ENCODE measurements at regions of chr7 and their contacts with region 1.

Region 1: GRCh38 chr7:6323967-6324701 is 51.7 kb upstream of the CYTH3 start:
- DNase-seq: no peak
- H3K4me3 ChIP-seq: no peak overlapping the region
- H3K27ac ChIP-seq: no peak overlapping the region
- H3K4me1 ChIP-seq: no peaks in the 10 kb centered on the region
- H3K27me3 ChIP-seq: no peaks in the 10 kb centered on the region
- CTCF ChIP-seq: no peak
- EP300 ChIP-seq: no peak
- RAD21 ChIP-seq: no peak

Region 2: DNA sequence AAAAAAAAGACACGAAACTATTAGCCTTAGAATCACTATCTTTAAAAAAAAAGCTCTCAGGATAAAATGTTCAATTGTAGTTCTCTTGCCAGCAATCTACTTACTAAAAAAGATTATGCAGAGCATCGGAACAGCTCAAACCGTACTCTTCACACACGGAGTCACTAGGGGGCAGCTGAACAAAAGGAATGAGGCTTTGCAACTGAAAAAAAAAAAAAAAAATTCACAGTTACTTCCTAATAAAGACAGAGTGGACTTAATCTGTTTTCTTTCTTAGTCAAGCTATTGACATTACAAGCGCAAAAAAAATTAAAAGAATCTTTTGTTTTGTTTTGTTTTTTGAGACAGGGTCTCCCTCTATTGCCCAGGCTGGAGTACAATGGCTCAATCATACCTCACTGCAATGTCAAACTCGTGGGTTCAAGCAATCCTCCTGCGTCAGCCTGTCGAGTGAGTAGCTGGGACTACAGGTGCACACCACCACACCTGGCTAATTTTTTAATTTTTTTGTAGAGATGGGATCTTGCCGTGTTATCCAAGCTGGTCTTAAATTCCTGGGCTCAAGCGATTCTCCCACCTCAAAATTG is 326.8 kb before region 1 on chr7:
- CTCF ChIA-PET with region 1: interaction called, 29 read pairs
- POLR2A ChIA-PET with region 1: no interaction called
- DNase-seq: peak; percentile 74
- H3K4me3 ChIP-seq: no peak overlapping the region; a peak in 1 of 4 replicates
- H3K27ac ChIP-seq: 0 out of 4 replicates have a peak overlapping the region, but pooled peaks of 1 of the 2 experiments have one; percentile 5
- H3K4me1 ChIP-seq: peaks cover 0 to 3% of the 10 kb centered on the region in 2 experiments; a peak in 2 of 4 replicates
- H3K27me3 ChIP-seq: no peaks in the 10 kb centered on the region
- CTCF ChIP-seq: peak; percentile 95
- EP300 ChIP-seq: no peak
- RAD21 ChIP-seq: peak; percentile 89

Region 3: DNA sequence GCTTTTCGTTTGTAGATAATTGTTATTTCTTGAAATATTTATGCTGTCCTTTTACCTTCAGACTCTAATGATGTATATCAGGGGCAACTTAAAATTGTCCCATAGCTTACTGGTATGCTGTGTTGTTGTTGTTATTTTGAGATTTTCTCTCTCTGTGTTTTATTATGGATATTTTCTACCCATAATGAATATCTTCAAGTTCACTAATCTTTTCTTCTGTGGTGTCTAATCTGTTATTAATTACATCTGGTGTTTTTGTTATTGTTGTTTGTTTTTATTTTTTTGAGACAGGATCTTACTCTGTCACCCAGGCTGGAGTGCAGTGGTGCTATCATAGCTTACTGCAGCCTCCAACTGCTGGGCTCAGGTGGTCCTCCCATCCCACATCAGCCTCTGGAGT is 190.9 kb before region 1 on chr7:
- CTCF ChIA-PET with region 1: interaction called, 11 read pairs
- POLR2A ChIA-PET with region 1: no interaction called
- DNase-seq: no peak
- H3K4me3 ChIP-seq: no peak overlapping the region
- H3K27ac ChIP-seq: no peak overlapping the region
- H3K4me1 ChIP-seq: no peaks in the 10 kb centered on the region
- H3K27me3 ChIP-seq: no peaks in the 10 kb centered on the region
- CTCF ChIP-seq: no peak
- EP300 ChIP-seq: no peak
- RAD21 ChIP-seq: no peak

Region 4: DNA sequence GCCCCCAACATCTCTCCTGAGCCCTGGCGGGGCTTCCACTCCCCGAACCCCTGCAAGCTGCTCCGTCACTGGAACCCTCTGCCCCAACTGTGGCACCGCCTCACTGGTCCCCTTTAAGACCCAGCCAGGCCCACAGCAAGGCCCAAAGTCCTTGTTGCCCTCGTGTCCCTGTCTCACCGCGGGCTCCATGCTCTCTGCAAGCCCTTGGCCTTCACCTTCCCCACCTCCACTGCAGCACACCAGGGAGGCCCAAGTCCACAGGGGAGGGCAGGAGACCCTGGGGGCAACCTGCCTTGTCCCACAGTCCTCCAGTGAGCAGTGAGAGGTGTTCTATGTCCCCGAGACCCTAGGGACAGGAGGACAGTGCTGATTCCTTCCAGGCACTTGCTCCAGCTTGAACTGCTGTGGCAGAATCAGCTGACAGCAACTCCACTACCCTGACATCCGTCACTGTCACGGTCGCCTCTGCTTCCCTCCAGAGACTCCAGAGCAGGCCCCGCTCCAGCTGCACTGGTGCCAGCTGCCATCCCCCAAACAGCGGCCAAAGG is 157.1 kb before region 1 on chr7:
- CTCF ChIA-PET with region 1: interaction called, 153 read pairs
- POLR2A ChIA-PET with region 1: interaction called, 3 read pairs
- DNase-seq: peak; percentile 85
- H3K4me3 ChIP-seq: no peak overlapping the region
- H3K27ac ChIP-seq: peak overlapping the region in 1 of 2 experiments; percentile 83; a peak in 2 of 4 replicates
- H3K4me1 ChIP-seq: peaks cover 0 to 56% of the 10 kb centered on the region in 2 experiments; a peak in 1 of 4 replicates
- H3K27me3 ChIP-seq: no peaks in the 10 kb centered on the region
- CTCF ChIP-seq: no peak
- EP300 ChIP-seq: peak in 1 of 2 experiments; percentile 48; a peak in 2 of 4 replicates
- RAD21 ChIP-seq: peak; percentile 37

Region 5: GRCh38 chr7:6272481-6273323 is 51.4 kb before region 1 on chr7 and contains the start of gene CYTH3:
- CTCF ChIA-PET with region 1: interaction called, 14 read pairs
- POLR2A ChIA-PET with region 1: no interaction called
- DNase-seq: peak; percentile 100
- H3K4me3 ChIP-seq: peak within 1 kb of the TSS; percentile 79 to 94
- H3K27ac ChIP-seq: peak within 1 kb of the TSS; percentile 64 to 70
- H3K4me1 ChIP-seq: peaks cover 12 to 28% of the 10 kb centered on the region in 2 experiments; a peak in 2 of 4 replicates
- H3K27me3 ChIP-seq: no peaks in the 10 kb centered on the region
- CTCF ChIP-seq: no peak
- EP300 ChIP-seq: no peak
- RAD21 ChIP-seq: peak; percentile 1; the same call in 1 of the 2 replicates
- polyA plus RNA-seq, gene CYTH3: 55.1 and 56.8 TPM in 2 replicates

Region 6: GRCh38 chr7:6306471-6306870 is 17.7 kb before region 1 on chr7:
- CTCF ChIA-PET with region 1: interaction called, 13 read pairs
- POLR2A ChIA-PET with region 1: no interaction called
- DNase-seq: no peak
- H3K4me3 ChIP-seq: no peak overlapping the region
- H3K27ac ChIP-seq: peak overlapping the region in 1 of 2 experiments; percentile 37; a peak in 2 of 4 replicates
- H3K4me1 ChIP-seq: peaks cover 0 to 9% of the 10 kb centered on the region in 2 experiments; a peak in 1 of 4 replicates
- H3K27me3 ChIP-seq: no peaks in the 10 kb centered on the region
- CTCF ChIP-seq: no peak
- EP300 ChIP-seq: peak in 1 of 2 experiments; percentile 66; a peak in 1 of 4 replicates
- RAD21 ChIP-seq: no peak

Region 7: GRCh38 chr7:6338551-6339274 is 14.6 kb after region 1 on chr7:
- CTCF ChIA-PET with region 1: interaction called, 27 read pairs
- POLR2A ChIA-PET with region 1: no interaction called
- DNase-seq: no peak
- H3K4me3 ChIP-seq: no peak overlapping the region
- H3K27ac ChIP-seq: no peak overlapping the region
- H3K4me1 ChIP-seq: no peaks in the 10 kb centered on the region
- H3K27me3 ChIP-seq: no peaks in the 10 kb centered on the region
- CTCF ChIP-seq: no peak
- EP300 ChIP-seq: no peak
- RAD21 ChIP-seq: no peak

Region 8: DNA sequence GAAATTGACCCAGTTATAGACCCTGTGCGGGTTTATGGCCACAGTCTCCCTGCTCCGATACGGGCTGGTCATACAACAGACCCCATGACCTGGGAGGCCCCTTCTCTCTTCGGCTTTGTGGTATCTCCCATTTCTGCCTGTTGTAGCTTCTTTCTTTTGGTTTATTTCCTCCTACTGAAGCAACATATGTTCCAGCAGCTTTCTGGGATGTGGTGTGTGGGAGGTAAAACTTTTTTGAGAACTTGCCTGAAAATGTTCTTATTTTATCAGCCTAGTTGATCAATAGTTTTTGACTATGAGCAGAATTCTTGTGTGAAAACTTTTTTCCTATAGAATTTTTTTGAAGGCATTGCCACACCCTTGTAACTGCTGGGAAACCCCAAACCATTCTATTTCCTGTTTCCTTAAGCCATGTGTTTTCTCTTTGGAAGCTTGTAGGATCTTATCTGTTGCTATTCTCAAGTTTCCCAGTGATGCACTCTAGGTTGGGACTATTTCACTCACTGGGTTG is 43.6 kb after region 1 on chr7:
- CTCF ChIA-PET with region 1: no interaction called
- POLR2A ChIA-PET with region 1: no interaction called
- DNase-seq: no peak
- H3K4me3 ChIP-seq: no peak overlapping the region
- H3K27ac ChIP-seq: peak overlapping the region in 1 of 2 experiments; percentile 39; a peak in 2 of 4 replicates
- H3K4me1 ChIP-seq: peaks cover 0 to 8% of the 10 kb centered on the region in 2 experiments; a peak in 1 of 4 replicates
- H3K27me3 ChIP-seq: no peaks in the 10 kb centered on the region
- CTCF ChIP-seq: no peak
- EP300 ChIP-seq: no peak
- RAD21 ChIP-seq: no peak

Measured in SK-N-SH (cell line).